AG04450 (cell line): ENCODE measurements at regions of chr6 and their contacts with region 1.

Region 1: DNA sequence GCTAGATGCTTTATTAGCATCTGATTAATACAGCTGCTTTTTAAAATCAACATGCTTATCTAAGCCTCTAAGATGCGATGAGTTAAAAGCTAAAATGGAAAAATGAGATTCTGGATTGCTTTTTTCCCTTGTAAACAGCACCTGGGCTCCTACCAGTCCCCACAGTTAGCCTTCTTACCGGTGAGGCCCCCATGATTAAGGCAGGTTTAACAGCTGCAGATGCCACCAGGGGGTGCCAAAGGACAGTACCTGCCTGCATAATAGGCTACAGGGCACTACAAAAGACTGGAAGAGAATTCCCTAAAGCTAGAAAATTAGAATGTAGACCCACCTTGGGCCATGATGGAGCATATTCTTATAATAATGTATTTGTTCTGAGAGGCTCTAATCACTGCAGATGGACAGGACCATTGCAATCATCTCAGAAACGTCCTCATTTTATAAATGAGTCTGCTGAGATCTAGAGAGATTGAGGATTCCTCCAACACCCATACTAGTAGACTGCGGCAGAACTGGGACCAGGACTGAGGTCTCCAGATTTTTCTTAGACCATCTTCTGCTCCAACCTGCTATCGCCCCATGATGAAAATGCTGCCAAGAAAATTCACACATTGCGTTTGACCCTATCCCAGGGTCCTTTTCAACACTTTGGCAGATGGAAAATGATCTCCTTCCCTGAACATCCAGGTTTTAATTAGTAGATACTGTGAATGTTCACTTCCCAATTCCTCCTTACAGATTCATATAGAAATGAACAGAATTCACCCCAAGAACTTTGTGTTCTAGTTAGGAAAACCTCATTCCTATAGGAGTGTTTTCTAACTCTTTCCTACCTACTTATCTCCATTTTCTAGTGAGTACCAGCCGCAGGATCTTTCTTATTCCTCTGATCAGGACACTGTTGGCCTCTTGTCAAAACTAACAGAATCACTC is 148.8 kb downstream of the RPS12 start:
- DNase-seq: no peak
- H3K4me3 ChIP-seq: no peak overlapping the region
- H3K27ac ChIP-seq: no peak overlapping the region
- H3K27me3 ChIP-seq: no peaks in the 10 kb centered on the region
- CTCF ChIP-seq: peak; percentile 89

Region 2: GRCh38 chr6:132830334-132830751 is 132.9 kb before region 1 on chr6:
- CTCF ChIA-PET with region 1: interaction called, 29 read pairs
- POLR2A ChIA-PET with region 1: no interaction called
- DNase-seq: no peak
- H3K4me3 ChIP-seq: no peak overlapping the region
- H3K27ac ChIP-seq: no peak overlapping the region
- H3K27me3 ChIP-seq: no peaks in the 10 kb centered on the region
- CTCF ChIP-seq: peak; percentile 71

Region 3: GRCh38 chr6:132952031-132952867 is 11.0 kb before region 1 on chr6:
- CTCF ChIA-PET with region 1: interaction called, 16 read pairs
- POLR2A ChIA-PET with region 1: no interaction called
- DNase-seq: no peak
- H3K4me3 ChIP-seq: no peak overlapping the region
- H3K27ac ChIP-seq: no peak overlapping the region
- H3K27me3 ChIP-seq: no peaks in the 10 kb centered on the region
- CTCF ChIP-seq: no peak

Region 4: GRCh38 chr6:132973514-132973993 is 10.4 kb after region 1 on chr6:
- CTCF ChIA-PET with region 1: interaction called, 10 read pairs
- POLR2A ChIA-PET with region 1: no interaction called
- DNase-seq: no peak
- H3K4me3 ChIP-seq: no peak overlapping the region
- H3K27ac ChIP-seq: no peak overlapping the region
- H3K27me3 ChIP-seq: no peaks in the 10 kb centered on the region
- CTCF ChIP-seq: no peak